Sigmoid colon (tissue), 7 donors: ENCODE measurements at regions of chr1 and their contacts with region 1.

Region 1: GRCh38 chr1:28235755-28236655 is at the start of gene ATP5IF1:
- DNase-seq: peak; percentile 99
- H3K4me3 ChIP-seq: peak within 1 kb of the TSS; percentile 80 to 97 (median 94)
- H3K27ac ChIP-seq: peak within 1 kb of the TSS; percentile 91 to 96 (median 94)
- H3K4me1 ChIP-seq: peaks cover 0 to 41% (median 30%) of the 10 kb centered on the region in 4 donors
- H3K27me3 ChIP-seq: no peaks in the 10 kb centered on the region
- CTCF ChIP-seq: no peak
- EP300 ChIP-seq: no peak
- POLR2A ChIP-seq: peak; percentile 82 to 91
- total RNA-seq, gene ATP5IF1: 167 to 260 (median 205) TPM

Region 2: DNA sequence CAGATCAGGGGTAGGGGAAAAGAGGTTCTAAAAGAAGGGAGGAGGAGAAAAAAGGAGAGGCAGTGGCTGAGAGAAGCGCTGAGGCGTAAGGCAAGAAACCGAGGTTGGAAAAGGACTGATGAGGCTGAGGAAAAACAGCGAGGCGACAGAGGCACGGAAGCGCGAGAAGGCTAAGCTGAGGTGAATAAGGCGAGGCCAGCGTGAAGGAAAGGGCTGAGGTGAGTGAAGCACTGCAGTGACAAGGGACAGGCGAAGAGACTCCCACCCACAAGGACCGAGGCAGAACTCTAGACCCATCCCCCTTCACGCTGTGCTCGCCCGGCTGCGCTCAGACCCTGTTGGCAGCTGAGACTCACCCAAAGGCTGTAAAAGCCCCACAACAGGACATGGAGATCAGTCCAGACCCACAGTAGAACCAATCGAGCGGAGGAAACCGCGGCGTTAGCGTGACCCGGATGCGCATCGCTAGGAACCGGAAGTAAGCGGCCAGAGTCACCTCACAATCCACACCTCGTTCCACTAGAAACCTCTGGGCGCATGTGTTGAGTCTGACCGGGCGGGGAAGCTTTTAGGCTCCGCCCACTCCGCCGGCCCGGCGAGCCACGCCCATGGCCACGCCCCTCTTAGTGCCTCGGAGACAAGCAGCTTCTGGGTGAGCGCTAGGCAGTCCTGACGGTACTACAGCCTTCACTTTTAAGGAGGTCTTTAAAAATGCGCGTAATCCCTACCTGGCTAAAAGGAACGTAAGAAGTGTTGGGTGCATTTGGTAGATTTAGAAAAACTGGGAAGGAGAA is 147.6 kb before region 1 on chr1 and contains the start of gene EYA3:
- intact Hi-C with region 1: loop called (anchors 5 kb)
- DNase-seq: peak; percentile 99
- H3K4me3 ChIP-seq: peak within 1 kb of the TSS; percentile 81 to 88 (median 84)
- H3K27ac ChIP-seq: peak within 1 kb of the TSS; percentile 90 to 91 (median 90)
- H3K4me1 ChIP-seq: peaks cover 0 to 29% (median 19%) of the 10 kb centered on the region in 4 donors
- H3K27me3 ChIP-seq: no peaks in the 10 kb centered on the region
- CTCF ChIP-seq: no peak
- EP300 ChIP-seq: no peak
- POLR2A ChIP-seq: peak in 1 of 2 donors; percentile 29
- total RNA-seq, gene EYA3: 7.8 to 10.0 (median 8.8) TPM

Region 3: DNA sequence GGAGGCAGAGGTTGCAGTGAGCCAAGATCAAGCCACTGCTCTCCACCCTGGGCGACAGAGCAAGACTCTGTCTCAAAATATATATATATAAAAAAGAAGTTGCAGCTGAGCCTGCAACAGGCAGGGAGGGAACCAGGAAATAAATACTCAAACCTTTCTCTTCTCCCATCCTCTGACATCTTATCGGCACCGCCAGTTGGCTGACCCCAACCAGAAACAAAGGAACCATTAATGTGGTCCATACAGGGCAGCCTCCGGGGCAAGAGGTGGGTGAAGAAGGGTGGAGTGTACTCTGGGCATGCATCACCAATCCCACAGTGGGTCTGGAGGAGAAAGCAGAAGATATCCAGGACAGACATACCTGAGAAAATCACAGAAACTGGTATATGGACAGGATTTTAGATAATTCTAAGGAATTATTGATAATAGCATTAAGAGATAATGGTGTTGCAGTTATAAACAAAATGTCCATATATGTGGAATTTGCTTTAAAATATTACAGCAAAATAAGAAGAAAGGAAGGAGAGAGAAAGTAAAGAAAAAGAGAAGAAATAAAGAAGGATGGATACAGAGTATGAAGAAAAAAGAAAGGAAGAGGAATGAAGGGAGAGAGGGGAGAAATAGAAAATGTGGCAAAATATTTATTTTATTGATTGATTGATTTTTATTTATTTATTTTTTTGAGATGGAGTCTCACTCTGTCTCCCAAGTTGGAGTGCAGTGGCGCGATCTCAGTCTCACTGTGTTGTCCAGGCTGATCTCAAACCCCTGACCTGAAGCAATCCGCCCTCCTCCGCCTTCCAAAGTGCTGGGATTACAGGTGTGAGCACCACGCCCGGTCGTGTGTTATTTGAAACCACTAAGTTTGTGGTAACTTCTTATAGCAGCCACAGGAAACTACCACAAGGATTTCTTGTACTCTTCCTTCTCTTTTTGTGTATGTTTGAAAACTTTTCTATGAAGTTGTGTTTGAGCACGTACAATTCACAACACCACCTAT is 55.4 kb before region 1 on chr1:
- intact Hi-C with region 1: no loop called
- DNase-seq: no peak
- H3K4me3 ChIP-seq: no peak overlapping the region
- H3K27ac ChIP-seq: no peak overlapping the region
- H3K4me1 ChIP-seq: no peaks in the 10 kb centered on the region
- H3K27me3 ChIP-seq: no peaks in the 10 kb centered on the region
- CTCF ChIP-seq: no peak
- EP300 ChIP-seq: no peak
- POLR2A ChIP-seq: no peak

Region 4: GRCh38 chr1:28505406-28506187 is 269.6 kb after region 1 on chr1 and contains the start of gene RCC1:
- intact Hi-C with region 1: loop called (anchors 10 kb)
- DNase-seq: peak; percentile 99
- H3K4me3 ChIP-seq: peak within 1 kb of the TSS; percentile 55 to 78 (median 71)
- H3K27ac ChIP-seq: peak within 1 kb of the TSS; percentile 77 to 93 (median 90)
- H3K4me1 ChIP-seq: peaks cover 5 to 47% (median 42%) of the 10 kb centered on the region in 4 donors
- H3K27me3 ChIP-seq: no peaks in the 10 kb centered on the region
- CTCF ChIP-seq: no peak
- EP300 ChIP-seq: peak in 1 of 4 donors; percentile 55
- POLR2A ChIP-seq: peak; percentile 93 to 94
- total RNA-seq, gene RCC1: 8.9 to 18.8 (median 10.8) TPM

Region 5: GRCh38 chr1:28581536-28582247 is 345.7 kb after region 1 on chr1:
- intact Hi-C with region 1: loop called (anchors 10 kb)
- DNase-seq: peak; percentile 99
- H3K4me3 ChIP-seq: peak overlapping the region; percentile 69 to 96 (median 86)
- H3K27ac ChIP-seq: peak overlapping the region; percentile 82 to 98 (median 94)
- H3K4me1 ChIP-seq: peaks cover 0 to 40% (median 30%) of the 10 kb centered on the region in 4 donors
- H3K27me3 ChIP-seq: no peaks in the 10 kb centered on the region
- CTCF ChIP-seq: no peak
- EP300 ChIP-seq: no peak
- POLR2A ChIP-seq: peak; percentile 93